CD4-positive, alpha-beta memory T cell (primary cell): ENCODE measurements at regions of chr4 and their contacts with region 1.

Region 1: GRCh38 chr4:17336524-17336961 is 175.3 kb downstream of the QDPR start:
- DNase-seq: peak; percentile 81 to 94 (median 83)
- H3K4me3 ChIP-seq: no peak overlapping the region
- H3K4me3 Mint-ChIP-seq: peak overlapping the region; percentile 43 to 85 (median 68)
- H3K27ac ChIP-seq: peak overlapping the region; percentile 31
- H3K27ac Mint-ChIP-seq: peak overlapping the region; percentile 90 to 96 (median 93)
- H3K4me1 ChIP-seq: peaks cover 23% of the 10 kb centered on the region
- H3K4me1 Mint-ChIP-seq: peaks cover 15 to 29% (median 22%) of the 10 kb centered on the region in 4 donors
- H3K27me3 ChIP-seq: no peaks in the 10 kb centered on the region
- H3K27me3 Mint-ChIP-seq: peaks cover 0 to 1% of the 10 kb centered on the region in 2 donors

Region 2: GRCh38 chr4:17030543-17030942 is 306.0 kb before region 1 on chr4:
- CTCF ChIA-PET with region 1: no interaction called
- POLR2A ChIA-PET with region 1: no interaction called
- intact Hi-C with region 1: no loop called
- DNase-seq: no peak
- H3K4me3 ChIP-seq: no peak overlapping the region
- H3K4me3 Mint-ChIP-seq: no peak overlapping the region
- H3K27ac ChIP-seq: no peak overlapping the region
- H3K27ac Mint-ChIP-seq: no peak overlapping the region
- H3K4me1 ChIP-seq: no peaks in the 10 kb centered on the region
- H3K4me1 Mint-ChIP-seq: no peaks in the 10 kb centered on the region
- H3K27me3 ChIP-seq: no peaks in the 10 kb centered on the region
- H3K27me3 Mint-ChIP-seq: peaks cover 6 to 9% of the 10 kb centered on the region in 2 donors

Region 3: GRCh38 chr4:17324386-17324830 is 12.1 kb before region 1 on chr4:
- CTCF ChIA-PET with region 1: interaction called, 13 read pairs
- POLR2A ChIA-PET with region 1: no interaction called
- intact Hi-C with region 1: no loop called
- DNase-seq: peak; percentile 25 to 50 (median 34)
- H3K4me3 ChIP-seq: no peak overlapping the region
- H3K4me3 Mint-ChIP-seq: peak overlapping the region in 6 of 8 donors; percentile 2 to 64 (median 50)
- H3K27ac ChIP-seq: no peak overlapping the region
- H3K27ac Mint-ChIP-seq: peak overlapping the region in 5 of 7 donors; percentile 5 to 62 (median 20)
- H3K4me1 ChIP-seq: peaks cover 9% of the 10 kb centered on the region
- H3K4me1 Mint-ChIP-seq: peaks cover 9 to 10% (median 10%) of the 10 kb centered on the region in 4 donors
- H3K27me3 ChIP-seq: no peaks in the 10 kb centered on the region
- H3K27me3 Mint-ChIP-seq: peaks cover 0 to 5% of the 10 kb centered on the region in 2 donors

Region 4: DNA sequence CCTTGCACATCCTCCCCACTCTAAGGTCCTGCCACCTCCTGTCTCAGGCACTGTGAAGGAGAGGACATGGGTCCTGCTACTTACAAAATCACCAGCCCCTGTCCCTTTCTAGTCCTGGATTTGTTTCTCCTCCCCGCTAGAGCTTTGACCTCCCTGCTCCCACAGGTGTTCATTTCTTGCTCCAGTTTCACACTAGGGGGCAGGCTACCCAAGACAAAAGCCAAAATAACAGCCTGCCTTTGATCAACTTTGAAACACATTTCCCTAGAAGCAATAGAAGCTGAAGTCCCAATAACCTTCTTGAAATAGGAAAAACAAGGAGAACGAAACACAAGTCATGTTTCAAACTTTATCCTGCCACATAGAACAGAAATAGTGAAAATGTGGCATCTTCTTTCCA is 10.9 kb after region 1 on chr4:
- CTCF ChIA-PET with region 1: interaction called, 14 read pairs
- POLR2A ChIA-PET with region 1: interaction called, 4 read pairs
- intact Hi-C with region 1: loop called (anchors 1 kb)
- DNase-seq: peak in 4 of 5 donors; percentile 13 to 30 (median 24)
- H3K4me3 ChIP-seq: no peak overlapping the region
- H3K4me3 Mint-ChIP-seq: no peak overlapping the region
- H3K27ac ChIP-seq: no peak overlapping the region
- H3K27ac Mint-ChIP-seq: no peak overlapping the region
- H3K4me1 ChIP-seq: no peaks in the 10 kb centered on the region
- H3K4me1 Mint-ChIP-seq: no peaks in the 10 kb centered on the region
- H3K27me3 ChIP-seq: no peaks in the 10 kb centered on the region
- H3K27me3 Mint-ChIP-seq: no peaks in the 10 kb centered on the region

Region 5: DNA sequence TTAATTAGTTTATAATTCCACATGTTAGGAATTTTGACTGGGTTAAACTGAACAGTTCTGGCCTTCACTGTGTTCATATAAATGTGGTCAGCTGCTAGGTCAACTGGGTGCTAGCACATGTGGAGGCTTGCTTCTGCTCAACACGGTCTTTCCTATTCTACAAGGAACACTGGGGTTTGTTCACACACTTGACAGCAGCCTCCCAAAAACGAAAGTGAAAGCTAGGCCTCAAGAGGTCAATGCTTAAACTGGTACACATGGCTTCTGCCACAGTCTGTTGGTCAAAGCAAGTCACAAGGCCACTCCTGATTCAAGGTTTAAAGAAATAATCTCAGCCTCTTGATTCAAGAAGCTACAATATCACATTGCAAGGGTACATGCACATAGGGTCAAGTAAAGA is 48.9 kb after region 1 on chr4:
- CTCF ChIA-PET with region 1: no interaction called
- POLR2A ChIA-PET with region 1: no interaction called
- intact Hi-C with region 1: loop called (anchors 5 kb)
- DNase-seq: peak in 4 of 5 donors; percentile 6 to 18 (median 12)
- H3K4me3 ChIP-seq: no peak overlapping the region
- H3K4me3 Mint-ChIP-seq: peak overlapping the region in 7 of 8 donors; percentile 61 to 77 (median 68)
- H3K27ac ChIP-seq: no peak overlapping the region
- H3K27ac Mint-ChIP-seq: peak overlapping the region in 4 of 7 donors; percentile 19 to 87 (median 62)
- H3K4me1 ChIP-seq: peaks cover 11% of the 10 kb centered on the region
- H3K4me1 Mint-ChIP-seq: peaks cover 13 to 27% (median 18%) of the 10 kb centered on the region in 4 donors
- H3K27me3 ChIP-seq: no peaks in the 10 kb centered on the region
- H3K27me3 Mint-ChIP-seq: no peaks in the 10 kb centered on the region